ENCODE measurements at regions of chrX and their contacts with region 1.

Region 1: DNA sequence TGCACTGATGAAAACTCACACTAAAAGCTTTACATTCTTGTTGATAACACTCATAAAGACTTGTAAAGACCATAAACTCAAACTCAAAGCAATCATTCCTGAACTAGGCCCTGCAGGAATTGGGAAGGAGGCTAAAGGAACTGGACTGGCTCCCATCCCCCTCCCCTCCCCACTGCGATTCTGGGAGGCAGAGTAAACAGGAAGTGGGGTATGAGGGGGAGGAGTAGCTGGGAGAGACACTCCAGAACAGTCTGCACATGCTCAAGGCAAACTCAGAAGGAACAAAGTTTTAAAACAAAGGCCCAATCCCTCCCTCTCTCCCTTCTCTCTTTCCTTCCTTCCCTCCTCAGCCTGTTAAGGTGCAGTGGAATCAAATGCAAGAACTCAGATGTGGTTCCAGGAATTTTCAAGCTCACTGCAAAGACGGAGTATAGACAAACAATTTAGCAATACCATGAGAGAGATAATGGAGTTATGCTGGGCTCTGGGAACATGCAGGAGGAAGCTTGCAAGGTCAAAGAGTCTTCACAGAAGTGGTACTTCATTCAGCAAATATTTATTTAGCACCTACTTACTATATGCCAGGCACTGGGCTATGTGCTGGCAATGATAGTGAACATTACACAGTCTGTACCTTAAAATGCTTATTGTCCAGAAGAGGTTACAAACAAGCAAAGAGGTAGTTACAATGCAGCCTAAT is 15.9 kb downstream of the MID1IP1 start:
- DNase-seq: no peak
- H3K4me3 ChIP-seq: no peak overlapping the region
- H3K27ac ChIP-seq: no peak overlapping the region
- H3K4me1 ChIP-seq: peaks cover 13% of the 10 kb centered on the region
- H3K27me3 ChIP-seq: no peaks in the 10 kb centered on the region
- CTCF ChIP-seq: no peak

Region 2: GRCh38 chrX:38879631-38880220 is 62.6 kb after region 1 on chrX:
- CTCF ChIA-PET with region 1: no interaction called
- dilution Hi-C with region 1: loop called (anchors 5 kb)
- in situ Hi-C with region 1: no loop called
- intact Hi-C with region 1: no loop called
- DNase-seq: peak; percentile 51
- H3K4me3 ChIP-seq: no peak overlapping the region
- H3K27ac ChIP-seq: no peak overlapping the region
- H3K4me1 ChIP-seq: peaks cover 20% of the 10 kb centered on the region
- H3K27me3 ChIP-seq: no peaks in the 10 kb centered on the region
- CTCF ChIP-seq: no peak

Measured in mammary epithelial cell (primary cell).